Activated T-helper 1 cell treated with anti-CD3 and anti-CD28 coated beads, Interleukin-12 subunit alpha, Interleukin-12 subunit beta, Interleukin-2, Interleukin-4 antibody, amounts not matched to agents 30 ng/mL and 10 ng/mL and 1 ng/mL, durations not matched to agents 14 hours and 24 hours and 36 hours (primary cell): ENCODE measurements at regions of chr7 and their contacts with region 1.

Region 1: GRCh38 chr7:6516387-6516983 is 34.8 kb downstream of the GRID2IP start:
- DNase-seq: peak; percentile 49
- H3K4me3 Mint-ChIP-seq: peak overlapping the region; percentile 67
- H3K27ac Mint-ChIP-seq: no peak overlapping the region
- H3K4me1 Mint-ChIP-seq: peaks cover 7% of the 10 kb centered on the region
- H3K27me3 Mint-ChIP-seq: peaks cover 6% of the 10 kb centered on the region

Region 2: DNA sequence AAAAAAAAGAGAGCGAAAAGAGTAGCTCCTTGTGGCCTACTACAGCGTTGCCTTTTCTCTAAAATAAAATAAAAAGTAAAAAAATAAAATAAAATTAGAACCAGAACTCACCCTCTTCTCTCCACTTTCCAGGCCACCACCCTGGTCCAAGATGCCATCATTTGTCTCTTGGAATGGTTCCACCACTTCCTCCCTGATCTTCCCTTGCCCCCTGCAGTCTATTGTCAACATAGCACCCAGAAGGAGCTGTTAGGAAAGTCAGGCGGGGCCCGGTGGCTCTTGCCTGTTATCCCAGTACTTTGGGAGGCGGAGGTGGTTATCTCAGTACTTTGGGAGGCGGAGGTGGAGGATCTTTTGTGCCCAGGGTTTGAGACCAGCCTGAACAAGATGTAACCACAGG is 42.4 kb after region 1 on chr7:
- intact Hi-C with region 1: loop called (anchors 2 kb)
- DNase-seq: no peak
- H3K4me3 Mint-ChIP-seq: no peak overlapping the region
- H3K27ac Mint-ChIP-seq: no peak overlapping the region
- H3K4me1 Mint-ChIP-seq: peaks cover 7% of the 10 kb centered on the region
- H3K27me3 Mint-ChIP-seq: peaks cover 6% of the 10 kb centered on the region

Region 3: GRCh38 chr7:6934986-6935385 is 418.5 kb after region 1 on chr7:
- intact Hi-C with region 1: loop called (anchors 5 kb)
- DNase-seq: no peak
- H3K4me3 Mint-ChIP-seq: no peak overlapping the region
- H3K27ac Mint-ChIP-seq: no peak overlapping the region
- H3K4me1 Mint-ChIP-seq: no peaks in the 10 kb centered on the region
- H3K27me3 Mint-ChIP-seq: no peaks in the 10 kb centered on the region